Panc1 (cell line): ENCODE measurements at regions of chr18 and their contacts with region 1.

Region 1: GRCh38 chr18:34976899-34977837 is 64.0 kb upstream of the MAPRE2 start:
- DNase-seq: no peak
- ATAC-seq: peak; percentile 64
- H3K4me3 ChIP-seq: peak overlapping the region; percentile 57 to 85
- H3K27ac ChIP-seq: no peak overlapping the region
- H3K4me1 ChIP-seq: peaks cover 4% of the 10 kb centered on the region; the same call in 1 of the 2 replicates
- H3K27me3 ChIP-seq: no peaks in the 10 kb centered on the region
- CTCF ChIP-seq: no peak

Region 2: DNA sequence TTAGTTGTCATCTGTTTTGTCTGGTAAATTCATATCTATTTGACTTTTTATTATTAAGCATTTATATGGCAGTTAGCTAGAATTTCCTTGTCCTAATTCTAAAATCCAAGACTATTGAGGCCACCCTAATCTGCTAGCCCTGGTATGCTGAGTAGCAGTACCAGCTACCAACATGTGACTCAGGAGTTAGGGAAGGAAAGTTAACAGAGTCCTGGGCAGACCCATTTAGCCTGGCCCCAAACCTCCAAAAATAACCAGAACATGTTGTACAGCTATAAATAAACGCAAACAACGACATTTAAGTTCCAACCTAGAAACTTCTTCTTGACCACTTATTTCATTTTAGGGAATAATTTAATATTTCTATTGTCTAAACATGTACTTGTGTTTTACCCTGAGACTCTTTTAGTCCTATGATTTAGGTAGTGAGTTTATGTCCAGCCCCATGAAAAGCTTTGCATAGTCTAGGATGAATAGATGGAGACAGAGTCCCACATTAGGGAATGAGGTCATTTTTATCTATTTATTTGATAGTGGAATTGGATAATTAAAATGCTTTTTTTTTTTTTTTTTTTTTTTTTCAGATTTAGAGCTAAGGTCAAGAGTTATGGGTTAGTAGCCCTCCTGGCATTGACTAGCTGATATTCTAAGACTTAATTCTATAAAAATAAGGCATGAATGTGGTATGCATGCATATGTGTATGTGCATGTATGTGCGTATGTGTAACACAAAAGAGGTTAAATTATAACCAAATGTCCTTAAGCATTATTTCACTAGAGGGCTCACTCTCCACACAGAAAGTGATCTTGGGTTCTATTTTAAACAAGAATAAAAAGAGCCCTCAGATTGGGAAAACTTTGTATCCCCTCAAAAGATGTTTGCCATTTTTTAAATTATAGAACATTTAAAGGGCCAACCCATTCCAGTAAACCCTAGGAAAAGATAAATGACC is 96.0 kb before region 1 on chr18:
- CTCF ChIA-PET with region 1: no interaction called
- POLR2A ChIA-PET with region 1: no interaction called
- in situ Hi-C with region 1: no loop called
- intact Hi-C with region 1: loop called (anchors 5 kb)
- DNase-seq: no peak
- ATAC-seq: no peak
- H3K4me3 ChIP-seq: no peak overlapping the region
- H3K27ac ChIP-seq: no peak overlapping the region
- H3K4me1 ChIP-seq: no peaks in the 10 kb centered on the region
- H3K27me3 ChIP-seq: no peaks in the 10 kb centered on the region
- CTCF ChIP-seq: peak; percentile 34; the same call in 1 of the 2 replicates